Activated CD8-positive, alpha-beta T cell treated with anti-CD3 and anti-CD28 coated beads for 36 hours (primary cell): ENCODE measurements at regions of chr10 and their contacts with region 1.

Region 1: DNA sequence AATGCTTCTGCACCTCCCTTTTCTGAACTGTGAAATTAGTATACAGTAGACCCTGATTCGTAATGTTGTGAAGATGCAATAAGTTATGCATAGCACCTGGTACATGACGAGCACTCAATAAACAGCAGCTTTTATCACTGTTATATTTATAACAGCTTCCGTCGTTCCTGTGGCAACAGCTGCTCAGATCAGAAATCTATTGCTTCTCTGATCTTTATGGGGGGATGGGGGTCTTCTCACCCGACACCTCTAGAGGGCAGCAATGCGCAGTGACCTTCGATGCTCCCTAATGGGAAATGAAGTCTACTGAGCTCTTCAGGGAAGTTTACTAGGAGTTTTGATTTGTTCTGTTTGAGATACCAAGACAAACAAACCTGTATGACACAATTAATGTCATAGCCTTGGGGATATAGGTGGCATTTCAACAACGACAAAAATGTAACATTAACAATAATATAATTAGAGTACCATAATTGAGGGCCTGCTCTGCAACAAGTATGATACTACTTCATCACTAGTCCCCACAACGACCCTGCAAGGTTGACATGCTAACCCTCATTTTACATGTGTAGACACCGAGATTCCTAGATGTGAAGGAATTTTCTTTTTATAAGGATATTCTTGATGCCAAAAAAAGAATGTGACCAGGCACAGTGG is 289.6 kb downstream of the SFMBT2 start:
- DNase-seq: peak; percentile 82
- ATAC-seq: peak; percentile 97
- H3K4me3 Mint-ChIP-seq: no peak overlapping the region
- H3K27ac Mint-ChIP-seq: peak overlapping the region; percentile 26
- H3K4me1 Mint-ChIP-seq: peaks cover 7% of the 10 kb centered on the region
- H3K27me3 Mint-ChIP-seq: no peaks in the 10 kb centered on the region
- CTCF ChIP-seq: peak; percentile 85

Region 2: GRCh38 chr10:6936931-6937330 is 184.4 kb before region 1 on chr10:
- CTCF ChIA-PET with region 1: no interaction called
- POLR2A ChIA-PET with region 1: no interaction called
- intact Hi-C with region 1: no loop called
- DNase-seq: no peak
- ATAC-seq: no peak
- H3K4me3 Mint-ChIP-seq: no peak overlapping the region
- H3K27ac Mint-ChIP-seq: no peak overlapping the region
- H3K4me1 Mint-ChIP-seq: no peaks in the 10 kb centered on the region
- H3K27me3 Mint-ChIP-seq: peaks cover 10% of the 10 kb centered on the region
- CTCF ChIP-seq: no peak

Region 3: GRCh38 chr10:7133278-7133677 is 12.0 kb after region 1 on chr10:
- CTCF ChIA-PET with region 1: interaction called, 14 read pairs
- POLR2A ChIA-PET with region 1: no interaction called
- intact Hi-C with region 1: no loop called
- DNase-seq: no peak
- ATAC-seq: no peak
- H3K4me3 Mint-ChIP-seq: no peak overlapping the region
- H3K27ac Mint-ChIP-seq: no peak overlapping the region
- H3K4me1 Mint-ChIP-seq: peaks cover 7% of the 10 kb centered on the region
- H3K27me3 Mint-ChIP-seq: peaks cover 2% of the 10 kb centered on the region
- CTCF ChIP-seq: no peak

Region 4: GRCh38 chr10:7153750-7154149 is 32.5 kb after region 1 on chr10:
- CTCF ChIA-PET with region 1: interaction called, 11 read pairs
- POLR2A ChIA-PET with region 1: interaction called, 3 read pairs
- intact Hi-C with region 1: no loop called
- DNase-seq: no peak
- ATAC-seq: no peak
- H3K4me3 Mint-ChIP-seq: no peak overlapping the region
- H3K27ac Mint-ChIP-seq: no peak overlapping the region
- H3K4me1 Mint-ChIP-seq: peaks cover 13% of the 10 kb centered on the region
- H3K27me3 Mint-ChIP-seq: peaks cover 2% of the 10 kb centered on the region
- CTCF ChIP-seq: no peak

Region 5: GRCh38 chr10:7281429-7281828 is 160.1 kb after region 1 on chr10:
- CTCF ChIA-PET with region 1: no interaction called
- POLR2A ChIA-PET with region 1: no interaction called
- intact Hi-C with region 1: no loop called
- DNase-seq: no peak
- ATAC-seq: no peak
- H3K4me3 Mint-ChIP-seq: no peak overlapping the region
- H3K27ac Mint-ChIP-seq: peak overlapping the region; percentile 6
- H3K4me1 Mint-ChIP-seq: peaks cover 30% of the 10 kb centered on the region
- H3K27me3 Mint-ChIP-seq: no peaks in the 10 kb centered on the region
- CTCF ChIP-seq: no peak

Region 6: GRCh38 chr10:7410862-7411670 is 289.8 kb after region 1 on chr10 and contains the start of gene SFMBT2:
- CTCF ChIA-PET with region 1: interaction called, 11 read pairs
- POLR2A ChIA-PET with region 1: interaction called, 3 read pairs
- intact Hi-C with region 1: loop called (anchors 5 kb)
- DNase-seq: peak; percentile 71
- ATAC-seq: peak; percentile 45
- H3K4me3 Mint-ChIP-seq: peak within 1 kb of the TSS; percentile 95
- H3K27ac Mint-ChIP-seq: peak within 1 kb of the TSS; percentile 97
- H3K4me1 Mint-ChIP-seq: peaks cover 41% of the 10 kb centered on the region
- H3K27me3 Mint-ChIP-seq: peaks cover 13% of the 10 kb centered on the region
- CTCF ChIP-seq: no peak
- total RNA-seq, gene SFMBT2: 23.8 to 27.6 TPM

Region 7: DNA sequence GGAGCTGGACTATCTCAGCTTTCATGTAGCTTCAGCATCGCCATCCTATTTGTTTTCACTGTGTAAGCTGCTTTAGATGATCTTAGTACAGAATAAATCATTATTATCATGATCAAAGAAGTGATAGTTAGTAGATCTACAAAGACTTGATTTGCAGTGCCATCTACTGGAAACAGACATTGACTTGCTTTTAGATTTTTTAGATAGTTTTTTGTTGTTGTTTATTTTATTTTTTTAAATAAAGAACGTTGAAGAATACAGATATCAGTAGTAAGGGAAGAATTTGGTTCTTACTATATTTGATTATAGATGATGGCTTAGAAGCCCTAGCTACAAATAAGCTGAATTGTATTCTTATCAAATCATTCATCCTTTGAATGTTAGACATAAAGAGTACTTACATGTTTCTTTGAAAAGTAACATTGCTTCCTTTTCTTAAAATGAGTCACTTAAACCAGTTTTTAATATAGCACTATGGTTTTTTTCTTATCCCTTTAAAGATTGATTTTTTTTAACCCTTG is 295.9 kb after region 1 on chr10:
- CTCF ChIA-PET with region 1: interaction called, 11 read pairs
- POLR2A ChIA-PET with region 1: interaction called, 3 read pairs
- intact Hi-C with region 1: loop called (anchors 5 kb)
- DNase-seq: no peak
- ATAC-seq: peak; percentile 31
- H3K4me3 Mint-ChIP-seq: no peak overlapping the region
- H3K27ac Mint-ChIP-seq: peak overlapping the region; percentile 72
- H3K4me1 Mint-ChIP-seq: peaks cover 23% of the 10 kb centered on the region
- H3K27me3 Mint-ChIP-seq: peaks cover 12% of the 10 kb centered on the region
- CTCF ChIP-seq: peak; percentile 73